ENCODE measurements at regions of chr11 and their contacts with region 1.

Region 1: DNA sequence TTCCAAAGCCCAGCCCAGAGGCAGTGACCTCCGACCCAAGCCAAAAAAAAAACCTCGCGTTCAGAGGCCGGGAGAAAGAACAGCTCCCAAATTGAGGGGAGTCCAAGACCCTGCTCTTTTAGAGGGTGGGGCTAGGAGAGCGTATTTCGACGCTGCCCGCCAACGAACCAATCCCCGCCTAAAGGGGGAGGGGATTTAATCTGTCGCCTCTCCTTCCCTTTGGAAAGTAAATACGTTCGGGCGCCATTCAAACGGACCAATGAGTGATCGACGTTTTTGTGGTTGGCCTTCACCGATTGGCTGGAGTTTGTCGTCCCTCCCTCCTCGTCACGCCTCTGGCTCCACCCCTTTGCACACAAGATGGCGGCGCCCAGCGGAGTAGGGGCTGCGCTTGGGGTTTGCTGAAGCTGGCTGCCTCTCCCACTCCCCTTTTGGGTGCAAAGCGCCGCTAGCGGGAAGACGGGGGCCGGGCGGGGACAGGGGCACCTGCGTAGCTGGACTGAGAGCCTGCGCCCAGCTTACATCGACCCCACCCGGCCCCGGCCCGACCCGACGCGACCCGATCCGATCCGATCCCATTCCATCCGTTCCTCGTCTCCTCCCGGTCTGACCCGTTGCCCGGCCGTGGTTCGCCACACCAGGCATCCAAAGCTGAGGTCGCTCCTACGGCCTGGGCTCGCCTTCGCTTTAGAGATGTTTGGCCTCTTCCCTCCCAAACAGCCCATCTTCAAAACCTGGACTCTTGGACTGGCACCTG is at the start of gene RNF26:
- DNase-seq: peak; percentile 96
- H3K4me3 Mint-ChIP-seq: peak within 1 kb of the TSS; percentile 100
- H3K27ac Mint-ChIP-seq: peak within 1 kb of the TSS; percentile 94
- H3K4me1 Mint-ChIP-seq: peaks cover 60% of the 10 kb centered on the region
- H3K27me3 Mint-ChIP-seq: peaks cover 19% of the 10 kb centered on the region
- total RNA-seq, gene RNF26: 33.5 to 35.1 TPM

Region 2: DNA sequence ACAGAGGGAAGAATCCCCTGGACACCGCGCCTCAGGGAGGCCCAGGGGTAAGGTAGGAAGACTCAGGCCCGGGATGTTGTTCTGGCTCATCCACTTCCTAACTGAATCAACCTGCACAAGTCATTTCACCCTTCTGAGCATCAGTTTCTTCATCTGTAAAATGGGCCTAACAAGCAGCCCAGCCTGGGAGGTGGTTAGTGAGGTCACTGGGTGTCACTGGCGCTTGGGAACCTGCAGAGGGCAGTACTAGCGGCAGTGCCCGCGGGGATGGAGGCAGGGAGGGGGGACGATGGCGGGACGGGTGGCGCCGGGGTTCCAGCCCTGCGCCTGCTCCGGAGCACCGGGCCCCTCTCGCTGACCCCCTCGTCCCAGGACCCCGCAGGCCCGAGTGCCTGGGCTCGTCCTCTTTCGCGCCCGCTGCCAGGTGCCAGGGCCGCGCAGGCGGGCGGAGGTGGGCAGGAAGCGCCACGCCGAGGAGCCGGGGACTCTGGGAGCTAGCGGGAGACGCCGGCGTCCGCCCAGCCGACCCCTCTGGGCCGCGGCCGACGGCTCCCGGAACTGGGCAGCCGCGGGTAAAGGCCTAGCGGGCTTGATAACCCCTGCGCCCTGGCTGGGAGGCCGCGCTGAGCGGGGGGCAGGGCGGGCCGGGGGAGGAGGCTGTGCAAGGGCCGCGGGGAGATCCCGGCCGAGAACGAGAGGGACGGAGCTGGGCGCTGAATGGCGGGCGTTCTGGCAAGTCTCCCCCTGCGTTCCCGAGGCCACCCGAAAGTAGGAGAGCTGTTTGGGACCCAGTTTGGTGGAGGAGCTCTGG is 165.7 kb before region 1 on chr11 and contains the start of gene NLRX1:
- CTCF ChIA-PET with region 1: interaction called, 12 read pairs
- POLR2A ChIA-PET with region 1: interaction called, 8 read pairs
- DNase-seq: peak; percentile 89
- H3K4me3 Mint-ChIP-seq: peak within 1 kb of the TSS; percentile 89
- H3K27ac Mint-ChIP-seq: peak within 1 kb of the TSS; percentile 89
- H3K4me1 Mint-ChIP-seq: peaks cover 23% of the 10 kb centered on the region
- H3K27me3 Mint-ChIP-seq: no peaks in the 10 kb centered on the region
- total RNA-seq, gene NLRX1: 19.2 to 21.9 TPM

Region 3: GRCh38 chr11:119323538-119324033 is 10.8 kb before region 1 on chr11:
- CTCF ChIA-PET with region 1: interaction called, 136 read pairs
- POLR2A ChIA-PET with region 1: interaction called, 17 read pairs
- DNase-seq: peak; percentile 83
- H3K4me3 Mint-ChIP-seq: no peak overlapping the region
- H3K27ac Mint-ChIP-seq: no peak overlapping the region
- H3K4me1 Mint-ChIP-seq: peaks cover 35% of the 10 kb centered on the region
- H3K27me3 Mint-ChIP-seq: peaks cover 9% of the 10 kb centered on the region

Region 4: GRCh38 chr11:119356349-119357031 is 22.1 kb after region 1 on chr11:
- CTCF ChIA-PET with region 1: interaction called, 27 read pairs
- POLR2A ChIA-PET with region 1: no interaction called
- DNase-seq: peak; percentile 77
- H3K4me3 Mint-ChIP-seq: peak overlapping the region; percentile 87
- H3K27ac Mint-ChIP-seq: no peak overlapping the region
- H3K4me1 Mint-ChIP-seq: peaks cover 16% of the 10 kb centered on the region
- H3K27me3 Mint-ChIP-seq: peaks cover 35% of the 10 kb centered on the region

Region 5: DNA sequence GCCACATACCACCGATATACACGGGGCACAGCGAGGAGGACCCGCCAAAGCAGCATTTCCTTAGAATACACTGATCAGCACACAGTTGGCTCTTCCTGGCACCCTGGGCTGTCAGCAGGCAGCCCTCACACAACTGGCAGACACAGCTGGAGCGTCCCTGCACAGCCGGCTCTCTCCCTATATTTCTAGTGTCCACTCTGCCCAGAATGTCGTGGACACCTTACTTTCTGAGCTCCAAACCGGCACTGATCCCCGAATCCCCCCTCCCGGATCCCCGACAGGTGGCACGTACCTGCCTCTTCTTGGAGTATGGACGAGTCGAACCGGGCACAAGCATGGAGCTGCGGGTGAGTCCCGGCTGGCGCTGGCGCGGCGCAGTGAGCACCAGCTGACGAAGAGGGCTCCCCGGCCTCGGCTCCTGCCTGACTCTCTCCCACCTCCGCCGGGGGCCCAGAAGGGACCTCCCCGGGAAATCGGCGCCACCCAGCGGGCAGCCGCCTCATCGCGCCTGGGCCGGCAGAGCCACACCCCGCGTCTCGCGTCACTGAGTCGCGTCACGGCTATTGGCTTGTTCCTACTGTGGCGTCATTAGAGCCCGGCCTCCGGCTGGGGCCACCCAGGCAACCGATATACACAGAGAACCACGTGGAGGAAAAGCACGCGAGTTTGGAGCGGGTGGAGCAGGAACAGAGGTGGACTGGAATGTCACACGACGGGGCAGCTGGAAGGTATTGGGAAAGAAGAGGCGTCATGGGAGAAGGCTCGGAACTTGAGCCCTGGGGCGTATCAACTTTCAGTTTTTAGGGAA is 47.0 kb after region 1 on chr11 and contains the start of gene USP2:
- CTCF ChIA-PET with region 1: interaction called, 10 read pairs
- POLR2A ChIA-PET with region 1: no interaction called
- DNase-seq: peak; percentile 96
- H3K4me3 Mint-ChIP-seq: no peak within 1 kb of the TSS
- H3K27ac Mint-ChIP-seq: no peak within 1 kb of the TSS
- H3K4me1 Mint-ChIP-seq: no peaks in the 10 kb centered on the region
- H3K27me3 Mint-ChIP-seq: peaks cover 5% of the 10 kb centered on the region
- total RNA-seq, gene USP2: 0.48 to 0.53 TPM

Region 6: DNA sequence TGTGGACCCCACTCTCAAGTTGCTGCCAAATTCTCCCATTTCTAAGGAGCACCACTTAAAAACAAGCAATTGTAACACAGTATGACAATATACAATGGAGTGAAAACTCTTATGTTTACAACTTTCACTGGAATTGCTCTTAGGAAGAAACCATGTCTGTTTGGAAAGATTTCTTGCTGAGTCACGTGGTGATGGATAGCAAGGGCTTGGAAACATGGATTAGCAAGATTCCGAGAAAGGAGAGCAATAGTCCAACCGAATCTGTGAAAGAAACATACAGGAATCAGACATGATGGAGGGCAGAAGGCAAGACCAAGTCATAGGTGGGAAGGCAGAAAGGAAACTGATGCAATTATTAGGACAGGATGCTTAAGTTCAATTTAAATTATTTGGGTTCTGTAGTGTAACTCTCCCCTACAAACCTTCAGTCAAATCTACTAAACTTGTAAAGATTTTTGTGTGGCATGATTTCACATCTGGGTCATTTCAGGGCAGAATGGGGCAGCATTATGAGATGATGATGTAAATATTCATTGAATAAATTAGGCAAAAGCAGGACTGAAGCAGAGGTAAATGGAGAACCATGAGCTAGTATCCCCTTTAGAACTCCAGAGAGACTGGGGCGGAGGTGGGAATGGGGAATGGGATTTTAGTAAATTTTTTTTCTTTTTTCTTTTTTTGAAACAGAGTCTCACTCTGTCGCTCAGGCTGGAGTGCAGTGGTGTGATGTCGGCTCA is 116.4 kb after region 1 on chr11:
- CTCF ChIA-PET with region 1: no interaction called
- POLR2A ChIA-PET with region 1: no interaction called
- DNase-seq: no peak
- H3K4me3 Mint-ChIP-seq: no peak overlapping the region
- H3K27ac Mint-ChIP-seq: no peak overlapping the region
- H3K4me1 Mint-ChIP-seq: no peaks in the 10 kb centered on the region
- H3K27me3 Mint-ChIP-seq: peaks cover 31% of the 10 kb centered on the region

Measured in activated CD4-positive, alpha-beta memory T cell treated with anti-CD3 and anti-CD28 coated beads, Interleukin-2, amount 10 ng/mL, durations not matched to agents 7 days and 5 days (primary cell).